ENCODE measurements at regions of chr17 and their contacts with region 1.

Region 1: GRCh38 chr17:76121932-76122430 is 18.4 kb upstream of the EXOC7 start:
- DNase-seq: no peak
- H3K4me3 ChIP-seq: peak overlapping the region; percentile 18
- H3K27me3 ChIP-seq: no peaks in the 10 kb centered on the region
- CTCF ChIP-seq: no peak

Region 2: DNA sequence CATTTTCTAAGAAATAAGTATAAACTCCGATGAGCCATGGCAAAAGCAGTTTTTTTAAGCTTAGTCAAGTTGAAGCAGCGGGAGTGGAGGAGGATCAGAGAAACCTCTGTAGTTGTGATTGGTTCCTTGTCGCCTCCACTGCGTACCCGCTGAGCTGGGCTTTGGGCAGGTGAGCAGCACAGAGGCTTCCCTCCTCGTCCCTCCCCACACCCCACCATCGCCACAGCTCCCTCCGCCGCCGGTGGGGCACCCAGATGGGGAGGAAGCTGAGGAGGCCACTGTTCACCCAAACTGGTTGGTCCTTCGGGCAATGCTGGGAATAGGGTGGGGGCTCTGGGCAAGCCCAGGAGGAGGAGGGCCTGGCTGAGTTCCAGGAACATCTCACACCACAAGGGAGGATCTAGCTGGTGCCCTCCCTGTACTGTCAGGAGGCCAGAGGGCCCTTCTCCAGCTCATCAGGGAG is 212.1 kb before region 1 on chr17:
- CTCF ChIA-PET with region 1: no interaction called
- POLR2A ChIA-PET with region 1: no interaction called
- DNase-seq: no peak
- H3K4me3 ChIP-seq: no peak overlapping the region
- H3K27me3 ChIP-seq: no peaks in the 10 kb centered on the region
- CTCF ChIP-seq: no peak

Region 3: DNA sequence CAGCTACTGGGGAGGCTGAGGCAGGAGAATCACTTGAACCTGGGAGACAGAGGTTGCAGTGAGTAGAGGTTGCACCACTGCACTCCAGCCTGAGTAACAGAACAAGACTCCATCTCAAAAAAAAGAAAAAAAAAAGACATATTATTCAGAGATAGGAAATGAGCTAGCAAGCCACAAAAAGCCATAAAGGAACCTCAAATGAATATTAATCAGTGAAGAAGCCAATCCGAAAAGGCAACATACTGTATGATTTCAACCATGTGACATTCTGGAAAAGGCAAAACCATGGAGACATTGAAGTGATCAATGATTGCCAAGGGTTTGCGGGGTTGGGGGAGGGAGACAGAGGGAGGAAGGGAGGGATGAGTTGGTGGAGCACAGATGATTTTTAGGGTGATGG is 10.0 kb before region 1 on chr17:
- CTCF ChIA-PET with region 1: interaction called, 11 read pairs
- POLR2A ChIA-PET with region 1: no interaction called
- DNase-seq: no peak
- H3K4me3 ChIP-seq: no peak overlapping the region
- H3K27me3 ChIP-seq: no peaks in the 10 kb centered on the region
- CTCF ChIP-seq: no peak

Region 4: DNA sequence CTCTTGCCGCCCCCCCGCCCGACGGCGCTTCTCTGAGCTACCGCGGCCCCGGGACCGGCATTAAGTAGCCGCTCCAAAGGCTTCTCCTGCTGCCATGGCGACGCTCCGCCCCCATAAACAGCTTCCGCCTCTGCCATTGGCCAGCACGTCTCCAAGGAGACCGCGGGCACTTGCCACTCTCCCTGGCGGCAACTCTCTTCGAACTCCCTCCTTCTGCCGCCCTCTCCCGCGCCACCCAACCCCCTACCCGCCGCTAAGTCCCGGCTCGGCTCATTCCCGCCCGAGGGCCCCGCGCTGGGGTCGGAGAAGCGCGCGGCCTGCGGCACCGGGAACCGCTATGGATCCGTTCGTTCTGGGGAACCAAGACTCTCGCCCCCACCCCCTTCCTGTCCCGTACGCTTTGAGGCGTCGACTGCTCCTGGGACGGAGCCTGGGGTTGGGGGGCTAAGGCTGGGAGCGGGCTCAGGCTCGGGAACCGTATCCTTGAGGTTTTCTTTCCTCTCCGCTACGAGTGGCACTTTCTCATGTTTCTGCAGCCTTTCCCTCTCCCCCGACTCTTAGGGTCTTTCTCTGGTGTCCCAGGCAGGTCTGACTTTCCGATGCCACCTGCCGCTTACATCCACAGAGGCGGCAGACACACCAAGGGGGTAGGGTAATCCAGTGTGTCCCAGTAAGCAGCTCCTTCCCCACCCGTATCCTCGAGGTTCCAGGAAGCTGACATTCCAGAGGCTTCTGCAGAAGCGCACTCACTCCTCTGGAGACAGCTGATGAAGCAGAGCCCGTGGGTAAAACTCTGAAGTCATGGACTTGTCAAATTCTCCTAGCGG is 19.4 kb after region 1 on chr17 and contains the start of gene FOXJ1:
- CTCF ChIA-PET with region 1: interaction called, 16 read pairs
- POLR2A ChIA-PET with region 1: no interaction called
- DNase-seq: peak; percentile 40
- H3K4me3 ChIP-seq: peak within 1 kb of the TSS; percentile 52
- H3K27me3 ChIP-seq: peaks cover 30% of the 10 kb centered on the region
- CTCF ChIP-seq: no peak
- polyA plus RNA-seq, gene FOXJ1: not detected in 2 replicates